ENCODE measurements at regions of chr12 and their contacts with region 1.

Region 1: DNA sequence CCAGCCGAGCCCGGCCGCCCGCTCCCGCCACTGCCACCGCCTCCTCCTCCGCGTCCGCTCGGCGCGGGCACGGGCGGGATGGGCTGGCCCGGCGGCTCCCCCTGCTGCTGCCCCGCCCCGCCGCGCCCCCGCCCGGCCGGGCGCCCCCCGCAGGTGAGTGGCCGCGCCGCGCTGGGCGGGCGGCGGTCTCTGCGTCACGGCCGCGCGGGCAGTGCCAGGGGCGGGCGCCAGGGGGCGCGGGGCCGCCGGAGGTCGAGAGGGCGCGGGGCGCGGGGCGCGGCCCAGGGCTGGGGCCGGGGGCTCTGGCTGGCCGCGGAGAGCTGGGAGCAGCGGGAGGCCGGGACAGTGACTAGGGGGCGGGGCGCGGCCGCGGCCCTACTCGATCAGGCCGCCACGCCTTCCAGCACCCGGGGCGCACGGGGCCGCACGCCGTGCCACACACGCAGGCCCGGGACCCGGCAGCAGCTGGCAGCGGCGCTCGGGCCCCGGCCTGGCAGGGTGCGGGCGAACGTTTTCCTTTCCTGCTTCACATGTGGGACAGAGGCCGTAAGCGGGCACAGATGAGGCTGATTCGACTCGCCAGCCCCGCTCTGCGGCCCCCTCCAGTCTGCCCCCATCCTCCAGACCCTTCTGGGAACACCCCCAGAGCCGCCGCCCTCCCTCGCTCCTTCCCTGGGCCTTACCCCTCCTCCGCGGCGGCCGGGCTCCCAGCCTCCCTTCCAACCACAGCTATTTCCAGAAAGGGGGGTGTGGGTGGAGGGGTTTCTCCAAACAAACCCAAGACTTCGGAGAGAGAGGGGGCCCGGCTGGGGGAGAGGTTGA is 2.4 kb upstream of the TNS2 start:
- DNase-seq: peak; percentile 67 to 83
- ATAC-seq: peak; percentile 36 to 37
- H3K4me3 ChIP-seq: peak overlapping the region; percentile 54
- H3K27ac ChIP-seq: peak overlapping the region; percentile 99
- H3K4me1 ChIP-seq: peaks cover 74% of the 10 kb centered on the region
- CTCF ChIP-seq: peak; percentile 71
- EP300 ChIP-seq: no peak
- POLR2A ChIP-seq: peak; percentile 38
- RAD21 ChIP-seq: no peak

Region 2: GRCh38 chr12:53031617-53032016 is 15.8 kb before region 1 on chr12:
- CTCF ChIA-PET with region 1: interaction called, 55 read pairs
- POLR2A ChIA-PET with region 1: interaction called, 3 read pairs
- DNase-seq: no peak
- ATAC-seq: peak; percentile 66 to 77; a peak in 5 of 6 replicates
- H3K4me3 ChIP-seq: no peak overlapping the region
- H3K27ac ChIP-seq: no peak overlapping the region
- H3K4me1 ChIP-seq: no peaks in the 10 kb centered on the region
- CTCF ChIP-seq: peak; percentile 26; the same call in 2 of the 3 replicates
- EP300 ChIP-seq: no peak
- POLR2A ChIP-seq: no peak
- RAD21 ChIP-seq: peak in 1 of 2 experiments; percentile 19; a peak in 1 of 5 replicates